ENCODE measurements at regions of chr2 and their contacts with region 1.

Region 1: DNA sequence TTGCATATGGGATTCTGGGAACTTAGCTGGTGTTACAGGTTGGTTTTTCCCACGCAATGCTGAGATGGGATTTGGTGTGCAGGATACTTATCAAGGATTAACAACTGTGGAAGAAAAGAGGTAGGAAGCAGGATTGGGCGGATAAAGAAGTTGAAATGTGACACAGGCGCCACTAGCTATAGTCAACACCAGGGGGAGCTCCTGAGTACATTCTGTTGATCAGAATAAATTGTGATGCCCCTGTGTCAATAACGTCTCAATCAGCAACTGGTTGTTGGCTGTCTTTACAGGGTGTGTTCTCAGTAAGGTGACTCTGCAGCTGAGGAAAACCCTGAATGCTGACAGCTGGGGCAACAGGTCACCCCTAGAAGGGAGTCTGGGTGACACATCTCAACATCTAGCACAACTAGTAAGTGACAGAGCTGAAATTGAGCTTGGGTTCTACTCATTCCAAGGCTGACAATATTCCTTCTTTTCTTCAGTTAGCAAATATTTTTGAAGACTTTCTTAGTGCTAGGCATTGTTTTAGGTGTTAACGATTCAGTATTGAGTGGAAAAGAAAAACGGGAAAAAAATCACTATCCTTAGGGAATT is 143.0 kb downstream of the ARL6IP6 start:
- DNase-seq: peak; percentile 27 to 32
- H3K4me3 ChIP-seq: no peak overlapping the region
- H3K27ac ChIP-seq: no peak overlapping the region
- H3K4me1 ChIP-seq: no peaks in the 10 kb centered on the region
- H3K27me3 ChIP-seq: no peaks in the 10 kb centered on the region
- CTCF ChIP-seq: peak in 5 of 7 experiments; percentile 36 to 70 (median 45)
- EP300 ChIP-seq: no peak
- POLR2A ChIP-seq: no peak

Region 2: GRCh38 chr2:151840216-151841046 is 1021.0 kb before region 1 on chr2:
- intact Hi-C with region 1: no loop called
- DNase-seq: no peak
- H3K4me3 ChIP-seq: no peak overlapping the region
- H3K27ac ChIP-seq: no peak overlapping the region
- H3K4me1 ChIP-seq: no peaks in the 10 kb centered on the region
- H3K27me3 ChIP-seq: no peaks in the 10 kb centered on the region
- CTCF ChIP-seq: no peak
- EP300 ChIP-seq: no peak
- POLR2A ChIP-seq: no peak

Region 3: DNA sequence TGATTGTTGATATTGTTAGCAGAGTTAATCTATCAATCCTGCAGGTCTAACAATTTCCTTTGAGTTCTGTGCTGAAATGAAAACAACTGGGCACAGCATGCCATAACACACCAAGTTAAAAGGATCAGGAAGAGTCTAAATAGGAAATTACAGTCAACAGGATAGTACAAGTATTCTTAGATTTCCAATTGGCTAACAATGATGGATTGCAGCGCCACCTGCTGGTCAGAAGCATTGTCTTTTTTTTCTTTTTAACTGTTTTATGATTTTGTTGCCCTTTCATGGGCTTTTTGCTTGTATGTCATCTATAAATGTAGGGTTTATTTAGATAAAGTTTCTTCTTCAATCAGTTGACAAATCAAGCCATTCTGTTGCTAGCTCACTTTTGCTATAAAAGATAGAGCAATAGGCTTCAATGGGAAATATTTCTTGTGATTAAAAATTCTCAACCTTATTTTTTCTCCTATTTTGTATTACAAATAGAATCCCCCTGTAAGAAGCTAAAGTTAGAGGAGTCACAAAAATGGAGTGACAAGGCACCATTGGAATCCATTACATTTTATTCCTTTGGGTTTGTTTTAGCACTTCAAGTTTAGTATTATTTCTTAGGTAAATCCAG is 657.9 kb after region 1 on chr2:
- intact Hi-C with region 1: loop called (anchors 5 kb)
- DNase-seq: peak; percentile 60 to 78
- H3K4me3 ChIP-seq: no peak overlapping the region
- H3K27ac ChIP-seq: no peak overlapping the region
- H3K4me1 ChIP-seq: no peaks in the 10 kb centered on the region
- H3K27me3 ChIP-seq: no peaks in the 10 kb centered on the region
- CTCF ChIP-seq: peak in 4 of 7 experiments; percentile 37 to 85 (median 64)
- EP300 ChIP-seq: no peak
- POLR2A ChIP-seq: no peak

Measured in stomach (tissue), 19 donors.